ENCODE measurements at regions of chr1 and their contacts with region 1.

Region 1: GRCh38 chr1:233364695-233365539 is 37.4 kb downstream of the MAP3K21 start:
- DNase-seq: peak; percentile 24
- H3K4me3 Mint-ChIP-seq: peak overlapping the region; percentile 15
- H3K27ac Mint-ChIP-seq: peak overlapping the region; percentile 52
- H3K4me1 Mint-ChIP-seq: peaks cover 84% of the 10 kb centered on the region
- H3K27me3 Mint-ChIP-seq: no peaks in the 10 kb centered on the region
- CTCF ChIP-seq: peak; percentile 45

Region 2: GRCh38 chr1:231528172-231529029 is 1836.5 kb before region 1 on chr1 and contains the start of gene TSNAX:
- CTCF ChIA-PET with region 1: interaction called, 13 read pairs
- intact Hi-C with region 1: no loop called
- DNase-seq: peak; percentile 96
- H3K4me3 Mint-ChIP-seq: peak within 1 kb of the TSS; percentile 98
- H3K27ac Mint-ChIP-seq: peak within 1 kb of the TSS; percentile 99
- H3K4me1 Mint-ChIP-seq: peaks cover 26% of the 10 kb centered on the region
- H3K27me3 Mint-ChIP-seq: no peaks in the 10 kb centered on the region
- CTCF ChIP-seq: no peak
- total RNA-seq, gene TSNAX: 55.5 and 56.9 TPM in 2 replicates

Region 3: DNA sequence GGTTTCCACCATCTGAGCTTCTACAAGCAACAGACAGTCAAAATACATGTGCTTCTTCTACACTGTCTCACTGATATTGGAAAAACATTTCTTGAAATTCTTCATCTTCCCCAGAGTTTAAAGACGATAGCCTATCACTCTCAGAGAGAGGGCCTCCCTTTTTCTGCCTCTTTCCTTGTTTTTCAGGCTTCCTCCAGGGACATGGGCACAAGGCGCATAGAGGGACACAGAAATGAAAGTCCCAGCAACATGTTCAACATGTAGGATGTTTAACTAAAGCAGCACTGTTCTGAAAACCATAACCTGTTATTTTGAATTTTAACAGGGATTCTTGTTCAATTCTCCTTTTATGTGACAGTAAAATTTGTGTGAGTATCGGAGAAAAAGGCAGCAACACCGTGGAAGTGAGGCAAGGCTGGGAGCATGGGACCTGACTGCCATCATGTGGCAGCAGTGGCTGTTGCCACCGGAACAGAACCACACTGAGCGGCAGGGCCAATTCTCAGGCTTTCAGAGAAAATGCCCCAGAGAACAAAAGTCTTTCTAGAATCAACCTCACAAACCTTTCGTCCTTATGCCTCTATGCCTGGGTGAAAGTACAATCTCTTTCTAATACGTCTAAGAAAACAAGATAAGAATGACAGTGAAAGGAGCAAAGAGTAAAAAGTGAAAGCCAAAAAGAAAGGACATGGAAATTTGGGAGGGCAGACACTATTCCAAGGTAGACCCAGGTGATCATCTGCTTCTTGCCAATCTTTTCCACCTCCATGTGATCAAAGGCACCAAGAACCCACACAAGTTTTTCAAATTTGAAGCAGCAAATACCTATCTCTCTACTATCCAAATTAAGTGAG is 123.9 kb before region 1 on chr1:
- CTCF ChIA-PET with region 1: no interaction called
- intact Hi-C with region 1: no loop called
- DNase-seq: peak; percentile 54
- H3K4me3 Mint-ChIP-seq: peak overlapping the region; percentile 10
- H3K27ac Mint-ChIP-seq: peak overlapping the region; percentile 81
- H3K4me1 Mint-ChIP-seq: peaks cover 41% of the 10 kb centered on the region
- H3K27me3 Mint-ChIP-seq: no peaks in the 10 kb centered on the region
- CTCF ChIP-seq: peak; percentile 57

Region 4: DNA sequence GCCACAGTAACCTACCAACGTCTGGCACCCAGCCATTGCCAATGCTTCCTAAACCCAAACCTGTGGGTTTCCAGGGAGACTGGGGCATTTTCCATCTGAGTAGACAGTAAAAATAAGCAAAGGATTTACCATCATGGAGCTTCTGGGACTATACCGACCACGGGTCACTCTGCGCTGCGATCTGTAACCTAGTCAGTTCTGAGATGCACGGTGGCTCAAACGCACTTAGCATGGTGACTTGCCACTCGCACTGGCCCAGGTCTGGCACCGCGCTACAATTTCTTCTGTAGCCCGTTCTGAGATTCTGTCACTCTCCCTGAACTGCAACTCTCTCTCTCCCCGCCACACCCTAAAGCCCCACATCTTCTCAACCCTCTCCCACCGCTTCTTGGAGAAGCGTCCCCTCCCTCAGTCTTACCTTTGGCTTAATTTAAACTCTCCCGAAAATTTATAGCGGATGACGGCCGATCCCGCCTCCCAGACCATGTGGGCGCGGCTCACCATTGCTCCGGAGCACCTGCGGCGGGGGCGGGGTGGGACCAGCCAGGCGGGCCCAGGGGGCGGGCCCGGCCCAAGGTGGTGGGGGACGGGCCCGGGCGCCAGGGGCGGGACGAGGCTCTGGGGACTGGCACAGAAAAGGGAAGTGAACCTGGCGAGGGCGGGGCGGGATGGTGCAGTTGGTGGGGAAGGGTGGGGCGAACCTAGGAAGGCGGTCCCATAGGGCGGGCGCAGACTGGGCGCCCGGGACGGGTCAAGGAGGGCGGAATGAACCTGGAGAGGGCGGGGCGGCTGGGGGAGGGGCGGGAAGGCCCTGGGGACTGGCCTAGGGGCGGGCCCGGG is 37.9 kb before region 1 on chr1:
- CTCF ChIA-PET with region 1: interaction called, 5 read pairs
- intact Hi-C with region 1: loop called (anchors 2 kb)
- DNase-seq: peak; percentile 100
- H3K4me3 Mint-ChIP-seq: peak overlapping the region; percentile 87
- H3K27ac Mint-ChIP-seq: peak overlapping the region; percentile 74
- H3K4me1 Mint-ChIP-seq: peaks cover 20% of the 10 kb centered on the region
- H3K27me3 Mint-ChIP-seq: no peaks in the 10 kb centered on the region
- CTCF ChIP-seq: no peak

Region 5: GRCh38 chr1:233394860-233395717 is 30.2 kb after region 1 on chr1:
- CTCF ChIA-PET with region 1: interaction called, 3 read pairs
- intact Hi-C with region 1: loop called (anchors 1 kb)
- DNase-seq: peak; percentile 59
- H3K4me3 Mint-ChIP-seq: no peak overlapping the region
- H3K27ac Mint-ChIP-seq: no peak overlapping the region
- H3K4me1 Mint-ChIP-seq: peaks cover 9% of the 10 kb centered on the region
- H3K27me3 Mint-ChIP-seq: no peaks in the 10 kb centered on the region
- CTCF ChIP-seq: peak; percentile 75

Region 6: GRCh38 chr1:233656032-233656620 is 291.2 kb after region 1 on chr1:
- CTCF ChIA-PET with region 1: interaction called, 3 read pairs
- intact Hi-C with region 1: loop called (anchors 5 kb)
- DNase-seq: peak; percentile 39
- H3K4me3 Mint-ChIP-seq: peak overlapping the region; percentile 70
- H3K27ac Mint-ChIP-seq: peak overlapping the region; percentile 99
- H3K4me1 Mint-ChIP-seq: peaks cover 73% of the 10 kb centered on the region
- H3K27me3 Mint-ChIP-seq: no peaks in the 10 kb centered on the region
- CTCF ChIP-seq: no peak

Region 7: GRCh38 chr1:234309598-234310459 is 944.9 kb after region 1 on chr1:
- CTCF ChIA-PET with region 1: no interaction called
- intact Hi-C with region 1: loop called (anchors 1 kb)
- DNase-seq: peak; percentile 81
- H3K4me3 Mint-ChIP-seq: peak overlapping the region; percentile 66
- H3K27ac Mint-ChIP-seq: no peak overlapping the region
- H3K4me1 Mint-ChIP-seq: peaks cover 14% of the 10 kb centered on the region
- H3K27me3 Mint-ChIP-seq: peaks cover 38% of the 10 kb centered on the region
- CTCF ChIP-seq: peak; percentile 87

Measured in Calu3 (cell line).